CD14-positive monocyte (primary cell): ENCODE measurements at regions of chr14 and their contacts with region 1.

Region 1: GRCh38 chr14:50927987-50928635 is 16.2 kb downstream of the PYGL start:
- DNase-seq: peak; percentile 87 to 91 (median 91)
- H3K4me3 ChIP-seq: peak overlapping the region in 1 of 3 experiments; percentile 59
- H3K4me3 Mint-ChIP-seq: peak overlapping the region; percentile 31 to 79
- H3K27ac ChIP-seq: peak overlapping the region; percentile 88 to 93
- H3K27ac Mint-ChIP-seq: peak overlapping the region; percentile 88 to 97 (median 96)
- H3K4me1 ChIP-seq: peaks cover 70 to 73% of the 10 kb centered on the region in 2 donors
- H3K4me1 Mint-ChIP-seq: peaks cover 66% of the 10 kb centered on the region
- H3K27me3 ChIP-seq: no peaks in the 10 kb centered on the region
- H3K27me3 Mint-ChIP-seq: no peaks in the 10 kb centered on the region
- CTCF ChIP-seq: no peak

Region 2: GRCh38 chr14:50813544-50813863 is 114.6 kb before region 1 on chr14:
- intact Hi-C with region 1: loop called in 1 of 2 experiments (anchors 10 kb)
- DNase-seq: peak; percentile 71 to 88 (median 81)
- H3K4me3 ChIP-seq: peak overlapping the region; percentile 17 to 63 (median 25)
- H3K4me3 Mint-ChIP-seq: peak overlapping the region; percentile 61 to 92
- H3K27ac ChIP-seq: peak overlapping the region in 1 of 2 donors; percentile 87
- H3K27ac Mint-ChIP-seq: peak overlapping the region; percentile 87 to 95 (median 93)
- H3K4me1 ChIP-seq: peaks cover 50 to 65% of the 10 kb centered on the region in 2 donors
- H3K4me1 Mint-ChIP-seq: peaks cover 54% of the 10 kb centered on the region
- H3K27me3 ChIP-seq: no peaks in the 10 kb centered on the region
- H3K27me3 Mint-ChIP-seq: no peaks in the 10 kb centered on the region
- CTCF ChIP-seq: no peak

Region 3: GRCh38 chr14:50823051-50823761 is 104.9 kb before region 1 on chr14:
- intact Hi-C with region 1: loop called (anchors 10 kb)
- DNase-seq: no peak
- H3K4me3 ChIP-seq: peak overlapping the region in 1 of 3 experiments; percentile 68
- H3K4me3 Mint-ChIP-seq: peak overlapping the region; percentile 66 to 85
- H3K27ac ChIP-seq: peak overlapping the region; percentile 39 to 94
- H3K27ac Mint-ChIP-seq: peak overlapping the region; percentile 93 to 99 (median 96)
- H3K4me1 ChIP-seq: peaks cover 61 to 82% of the 10 kb centered on the region in 2 donors
- H3K4me1 Mint-ChIP-seq: peaks cover 74% of the 10 kb centered on the region
- H3K27me3 ChIP-seq: no peaks in the 10 kb centered on the region
- H3K27me3 Mint-ChIP-seq: no peaks in the 10 kb centered on the region
- CTCF ChIP-seq: no peak

Region 4: GRCh38 chr14:50943943-50944646 is 16.0 kb after region 1 on chr14 and contains the start of gene PYGL:
- intact Hi-C with region 1: loop called in 1 of 2 experiments (anchors 2 kb)
- DNase-seq: peak; percentile 48 to 62 (median 62)
- H3K4me3 ChIP-seq: peak within 1 kb of the TSS; percentile 56 to 96 (median 78)
- H3K4me3 Mint-ChIP-seq: peak within 1 kb of the TSS; percentile 95 to 99
- H3K27ac ChIP-seq: peak within 1 kb of the TSS; percentile 74 to 94
- H3K27ac Mint-ChIP-seq: peak within 1 kb of the TSS; percentile 83 to 95 (median 88)
- H3K4me1 ChIP-seq: peaks cover 38 to 44% of the 10 kb centered on the region in 2 donors
- H3K4me1 Mint-ChIP-seq: peaks cover 44% of the 10 kb centered on the region
- H3K27me3 ChIP-seq: no peaks in the 10 kb centered on the region
- H3K27me3 Mint-ChIP-seq: peaks cover 0 to 1% (median 0%) of the 10 kb centered on the region in 3 donors
- CTCF ChIP-seq: no peak
- polyA plus RNA-seq, gene PYGL: 125 to 184 (median 166) TPM